Heart right ventricle (tissue), 16 donors: ENCODE measurements at regions of chr14 and their contacts with region 1.

Region 1: GRCh38 chr14:61269321-61270083 is 11.6 kb downstream of the TMEM30B start:
- DNase-seq: peak; percentile 42 to 71
- ATAC-seq: peak; percentile 63 to 87 (median 75)
- H3K4me3 ChIP-seq: peak overlapping the region in 8 of 10 donors; percentile 23 to 54 (median 34)
- H3K27ac ChIP-seq: no peak overlapping the region
- H3K4me1 ChIP-seq: peaks cover 0 to 8% (median 0%) of the 10 kb centered on the region in 9 donors
- H3K27me3 ChIP-seq: peaks cover 3 to 70% (median 30%) of the 10 kb centered on the region in 7 donors
- CTCF ChIP-seq: peak; percentile 56 to 92 (median 76)

Region 2: GRCh38 chr14:61121355-61121787 is 148.1 kb before region 1 on chr14:
- intact Hi-C with region 1: no loop called
- DNase-seq: no peak
- ATAC-seq: no peak
- H3K4me3 ChIP-seq: no peak overlapping the region
- H3K27ac ChIP-seq: peak overlapping the region in 1 of 10 donors; percentile 2
- H3K4me1 ChIP-seq: peaks cover 0 to 19% (median 12%) of the 10 kb centered on the region in 9 donors
- H3K27me3 ChIP-seq: no peaks in the 10 kb centered on the region
- CTCF ChIP-seq: no peak

Region 3: DNA sequence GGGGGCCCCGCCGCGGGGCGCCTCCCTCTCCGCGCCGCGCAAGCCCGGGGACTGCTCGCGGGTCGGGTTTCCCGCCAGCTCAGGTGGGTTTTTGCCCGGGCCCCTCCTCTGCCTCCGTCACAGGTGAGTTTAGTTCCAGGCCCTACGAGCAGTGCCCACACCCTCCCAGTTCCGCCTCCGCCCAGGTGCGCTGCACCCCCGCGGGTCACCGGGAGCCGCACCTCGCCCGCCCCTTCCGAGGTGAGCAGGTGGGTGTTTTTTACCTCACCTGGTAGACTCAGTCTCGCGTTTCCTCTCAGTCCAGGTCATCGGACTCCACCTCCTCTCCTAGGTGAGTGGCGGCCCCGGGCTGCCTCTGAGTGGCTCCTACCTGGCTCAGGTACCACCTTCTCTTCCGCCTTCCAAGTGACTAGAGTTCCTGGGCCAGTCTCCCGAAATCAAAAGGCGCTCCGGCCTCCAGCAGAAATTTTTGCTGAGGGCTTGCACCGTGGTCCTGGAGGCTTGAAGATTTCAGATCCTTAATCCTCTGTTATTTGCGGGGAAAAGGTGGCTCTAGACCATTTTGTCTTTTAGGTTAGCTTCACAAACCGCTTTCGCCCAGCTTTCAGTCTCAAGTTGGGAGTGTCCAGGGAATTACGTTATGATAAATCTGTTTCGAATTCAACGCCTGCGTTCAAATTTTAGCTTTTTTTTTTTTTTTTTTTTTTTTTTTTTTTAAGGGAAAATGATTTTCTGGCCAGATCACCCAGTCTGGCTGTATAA is 11.9 kb after region 1 on chr14 and contains the start of gene TMEM30B:
- intact Hi-C with region 1: loop called in 2 of 10 experiments (anchors 1 to 2 kb)
- DNase-seq: no peak
- ATAC-seq: peak in 2 of 8 donors; percentile 6 to 21
- H3K4me3 ChIP-seq: peak within 1 kb of the TSS; percentile 14 to 64 (median 56)
- H3K27ac ChIP-seq: peak within 1 kb of the TSS in 9 of 10 donors; percentile 13 to 87 (median 77)
- H3K4me1 ChIP-seq: peaks cover 0 to 24% (median 19%) of the 10 kb centered on the region in 9 donors
- H3K27me3 ChIP-seq: peaks cover 0 to 68% (median 28%) of the 10 kb centered on the region in 7 donors
- CTCF ChIP-seq: no peak
- total RNA-seq, gene TMEM30B: 0.32 to 1.9 (median 0.71) TPM

Region 4: DNA sequence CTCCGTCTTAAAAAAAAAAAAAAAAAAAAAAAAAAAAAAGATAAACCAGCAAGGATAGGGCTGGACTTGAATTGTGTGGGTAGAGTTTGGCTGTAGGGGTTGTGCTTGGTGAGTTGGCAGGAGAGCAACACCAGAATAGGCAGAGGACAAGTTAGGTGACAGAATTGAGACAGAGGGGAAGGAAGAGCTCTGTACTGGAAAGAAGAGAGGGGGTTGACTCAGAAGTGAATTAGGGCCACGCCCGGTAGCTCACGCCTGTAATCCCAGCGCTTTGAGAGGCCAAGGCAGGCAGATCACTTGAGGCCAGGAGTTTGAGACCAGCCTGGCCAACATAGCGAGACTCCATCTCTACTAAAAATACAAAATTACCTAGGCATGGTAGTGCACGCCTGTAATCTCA is 17.7 kb after region 1 on chr14:
- intact Hi-C with region 1: loop called in 2 of 10 experiments (anchors 1 to 2 kb)
- DNase-seq: no peak
- ATAC-seq: no peak
- H3K4me3 ChIP-seq: no peak overlapping the region
- H3K27ac ChIP-seq: no peak overlapping the region
- H3K4me1 ChIP-seq: peaks cover 0 to 13% (median 5%) of the 10 kb centered on the region in 9 donors
- H3K27me3 ChIP-seq: peaks cover 0 to 27% (median 0%) of the 10 kb centered on the region in 7 donors
- CTCF ChIP-seq: no peak

Region 5: GRCh38 chr14:61456720-61457119 is 187.2 kb after region 1 on chr14:
- intact Hi-C with region 1: no loop called
- DNase-seq: peak; percentile 58 to 91
- ATAC-seq: peak; percentile 61 to 82 (median 76)
- H3K4me3 ChIP-seq: no peak overlapping the region
- H3K27ac ChIP-seq: no peak overlapping the region
- H3K4me1 ChIP-seq: peaks cover 0 to 53% (median 27%) of the 10 kb centered on the region in 9 donors
- H3K27me3 ChIP-seq: no peaks in the 10 kb centered on the region
- CTCF ChIP-seq: peak; percentile 70 to 93 (median 90)